Calu3 (cell line): ENCODE measurements at regions of chr7 and their contacts with region 1.

Region 1: DNA sequence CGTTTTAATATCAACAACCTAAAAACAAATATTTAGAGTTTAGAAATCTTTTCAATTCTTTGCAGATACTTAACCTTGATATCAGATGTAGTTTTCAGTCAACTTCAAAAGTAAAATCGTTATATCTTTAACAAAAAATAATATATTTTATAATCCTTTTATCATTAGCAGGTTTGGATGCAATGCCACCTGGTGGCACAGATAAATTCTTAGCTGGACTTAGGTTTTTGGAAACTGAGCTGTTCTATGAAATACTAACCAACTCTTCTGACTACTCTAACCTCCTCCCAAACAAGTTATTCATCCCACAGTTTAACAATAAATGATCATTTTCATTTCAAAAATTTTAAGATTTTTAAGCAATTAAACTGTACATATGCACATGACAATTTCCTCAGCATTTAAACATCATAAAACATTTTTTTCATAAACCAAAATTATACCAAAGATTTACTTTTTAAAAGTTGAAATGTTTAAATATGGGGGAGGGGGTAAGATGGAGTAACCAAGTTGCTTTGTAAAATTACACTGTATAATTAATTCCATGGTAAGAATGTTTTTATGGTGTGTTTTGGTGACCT is 56.9 kb downstream of the HIBADH start:
- DNase-seq: peak; percentile 35
- H3K4me3 Mint-ChIP-seq: peak overlapping the region; percentile 9
- H3K27ac Mint-ChIP-seq: peak overlapping the region; percentile 55
- H3K4me1 Mint-ChIP-seq: peaks cover 26% of the 10 kb centered on the region
- H3K27me3 Mint-ChIP-seq: no peaks in the 10 kb centered on the region
- CTCF ChIP-seq: peak; percentile 62

Region 2: DNA sequence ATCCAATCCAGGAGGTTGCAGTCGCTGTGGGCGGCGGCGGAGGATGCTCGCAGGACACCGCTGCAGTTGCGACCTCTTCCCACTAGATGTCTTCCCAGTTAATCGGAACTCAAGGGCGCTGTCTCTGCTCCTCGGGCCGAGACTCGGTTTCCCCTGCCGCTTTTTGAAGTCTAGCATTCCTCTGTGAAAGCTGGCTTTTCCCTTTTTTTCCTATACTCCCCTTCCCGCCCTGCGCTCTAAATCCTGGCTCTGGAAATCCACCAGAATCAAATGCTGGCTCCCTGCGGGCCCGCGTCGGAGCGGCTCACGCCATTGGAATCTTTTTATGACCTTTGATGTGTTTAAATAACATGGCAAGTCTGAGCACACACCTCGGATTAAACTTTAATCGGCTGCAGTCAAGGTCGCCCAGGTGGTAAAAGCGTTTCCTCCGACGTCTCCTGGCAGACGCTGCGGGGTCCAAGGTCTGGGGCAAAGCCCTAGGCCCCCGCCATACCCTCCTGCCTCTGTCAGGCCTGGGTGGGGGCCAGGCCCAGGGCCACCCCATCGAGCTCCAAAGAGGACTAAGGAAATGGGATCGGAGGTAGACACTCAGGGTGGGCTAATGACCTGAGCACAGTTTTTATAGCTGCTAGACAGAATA is 395.2 kb before region 1 on chr7:
- CTCF ChIA-PET with region 1: interaction called, 10 read pairs
- intact Hi-C with region 1: no loop called
- DNase-seq: peak; percentile 76
- H3K4me3 Mint-ChIP-seq: peak overlapping the region; percentile 71
- H3K27ac Mint-ChIP-seq: no peak overlapping the region
- H3K4me1 Mint-ChIP-seq: peaks cover 8% of the 10 kb centered on the region
- H3K27me3 Mint-ChIP-seq: peaks cover 23% of the 10 kb centered on the region
- CTCF ChIP-seq: peak; percentile 93

Region 3: DNA sequence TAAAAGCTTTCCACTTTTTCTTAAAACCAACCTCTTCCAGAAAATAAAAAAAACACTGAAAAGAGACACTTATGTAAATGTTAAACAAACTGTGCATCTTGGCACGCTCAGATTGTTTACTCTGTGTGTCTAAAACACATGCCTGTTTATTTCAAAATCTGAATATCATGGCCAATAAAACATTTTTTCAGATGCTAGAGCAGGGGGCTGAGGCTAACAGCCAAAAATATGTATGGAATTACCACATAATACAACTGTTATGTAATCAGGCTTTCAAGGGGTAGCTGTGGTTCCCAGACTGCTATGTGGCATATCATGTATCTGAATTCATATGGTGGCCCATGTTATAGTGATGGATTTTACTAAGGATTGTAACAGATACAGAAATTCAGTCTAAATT is 73.5 kb before region 1 on chr7:
- CTCF ChIA-PET with region 1: no interaction called
- intact Hi-C with region 1: no loop called
- DNase-seq: no peak
- H3K4me3 Mint-ChIP-seq: no peak overlapping the region
- H3K27ac Mint-ChIP-seq: no peak overlapping the region
- H3K4me1 Mint-ChIP-seq: no peaks in the 10 kb centered on the region
- H3K27me3 Mint-ChIP-seq: no peaks in the 10 kb centered on the region
- CTCF ChIP-seq: no peak

Region 4: GRCh38 chr7:27640914-27641580 is 35.3 kb after region 1 on chr7:
- CTCF ChIA-PET with region 1: interaction called, 12 read pairs
- intact Hi-C with region 1: no loop called
- DNase-seq: peak; percentile 88
- H3K4me3 Mint-ChIP-seq: peak overlapping the region; percentile 50
- H3K27ac Mint-ChIP-seq: peak overlapping the region; percentile 76
- H3K4me1 Mint-ChIP-seq: peaks cover 68% of the 10 kb centered on the region
- H3K27me3 Mint-ChIP-seq: no peaks in the 10 kb centered on the region
- CTCF ChIP-seq: no peak

Region 5: GRCh38 chr7:27730112-27730511 is 124.3 kb after region 1 on chr7:
- CTCF ChIA-PET with region 1: no interaction called
- intact Hi-C with region 1: no loop called
- DNase-seq: no peak
- H3K4me3 Mint-ChIP-seq: no peak overlapping the region
- H3K27ac Mint-ChIP-seq: no peak overlapping the region
- H3K4me1 Mint-ChIP-seq: peaks cover 13% of the 10 kb centered on the region
- H3K27me3 Mint-ChIP-seq: no peaks in the 10 kb centered on the region
- CTCF ChIP-seq: no peak

Region 6: DNA sequence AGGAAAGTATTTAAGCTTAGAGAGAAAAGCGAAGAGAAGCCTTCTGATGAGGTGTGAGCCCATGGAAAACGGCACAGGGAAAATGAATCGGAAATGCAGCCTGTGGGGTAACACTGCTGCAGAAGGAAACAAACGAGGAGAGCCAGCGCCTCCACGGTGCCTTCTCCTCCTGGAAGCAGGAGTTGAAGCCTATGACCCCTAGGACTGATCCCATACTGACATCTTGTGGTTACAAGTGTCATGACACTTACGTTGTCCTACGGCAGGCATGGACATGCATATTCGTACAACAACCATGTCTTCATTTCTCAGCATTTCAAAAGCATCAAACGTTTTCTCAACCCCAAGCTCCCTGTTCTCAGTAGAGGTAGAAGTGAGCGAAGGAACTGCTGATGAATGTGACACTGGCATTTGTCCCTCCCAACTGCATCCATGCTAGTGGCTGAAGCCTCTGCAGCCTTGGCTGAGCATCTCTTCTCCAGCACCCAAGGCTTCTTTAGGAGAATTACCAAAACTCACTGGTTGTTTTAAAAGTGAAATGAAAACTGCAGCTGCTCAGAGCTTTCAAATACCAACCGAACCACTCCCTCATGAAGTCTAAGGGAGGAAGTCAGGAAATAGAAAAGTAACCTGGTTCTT is 414.6 kb after region 1 on chr7:
- CTCF ChIA-PET with region 1: no interaction called
- intact Hi-C with region 1: no loop called
- DNase-seq: peak; percentile 75
- H3K4me3 Mint-ChIP-seq: no peak overlapping the region
- H3K27ac Mint-ChIP-seq: no peak overlapping the region
- H3K4me1 Mint-ChIP-seq: peaks cover 9% of the 10 kb centered on the region
- H3K27me3 Mint-ChIP-seq: no peaks in the 10 kb centered on the region
- CTCF ChIP-seq: peak; percentile 84